H1 (cell line): ENCODE measurements at regions of chr1 and their contacts with region 1.

Region 1: DNA sequence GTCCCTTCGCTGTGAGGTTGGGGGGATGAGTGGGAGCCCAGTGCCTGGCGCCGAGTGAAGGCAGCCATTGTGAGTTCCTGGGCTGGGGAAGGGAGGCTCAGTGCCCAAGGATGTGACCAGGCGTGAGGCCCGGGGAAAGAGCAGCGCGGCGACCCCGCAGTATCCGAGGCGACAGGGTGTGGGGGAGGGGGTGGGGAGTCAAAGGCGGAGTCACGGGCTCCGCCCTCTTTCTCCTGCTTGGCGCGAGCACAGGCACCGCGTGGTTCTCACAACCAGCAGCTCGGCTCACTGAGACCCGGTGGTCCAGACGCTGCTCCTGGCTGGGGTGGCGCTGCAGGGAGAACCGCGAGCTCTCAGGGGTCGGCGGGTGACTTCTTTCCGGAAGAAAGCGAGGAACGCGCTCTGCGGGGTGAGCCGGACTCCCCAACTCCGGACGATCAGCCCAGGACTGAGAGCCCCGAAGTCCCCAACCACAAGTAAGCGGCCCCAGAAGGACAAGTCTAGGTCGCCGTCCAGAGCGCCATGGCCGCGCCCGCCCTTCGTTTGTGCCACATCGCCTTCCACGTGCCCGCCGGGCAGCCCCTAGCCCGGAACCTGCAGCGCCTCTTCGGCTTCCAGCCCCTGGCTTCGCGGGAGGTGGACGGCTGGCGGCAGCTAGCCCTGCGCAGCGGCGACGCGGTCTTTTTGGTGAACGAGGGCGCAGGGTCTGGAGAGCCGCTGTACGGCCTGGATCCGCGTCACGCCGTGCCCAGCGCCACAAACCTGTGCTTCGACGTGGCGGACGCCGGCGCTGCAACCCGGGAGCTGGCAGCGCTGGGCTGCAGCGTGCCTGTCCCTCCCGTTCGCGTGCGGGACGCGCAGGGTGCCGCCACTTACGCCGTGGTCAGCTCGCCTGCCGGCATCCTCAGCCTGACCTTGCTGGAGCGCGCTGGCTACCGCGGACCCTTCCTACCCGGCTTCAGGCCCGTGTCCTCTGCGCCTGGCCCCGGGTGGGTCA is at the start of gene HPDL:
- DNase-seq: peak; percentile 64 to 85
- H3K4me3 ChIP-seq: peak within 1 kb of the TSS; percentile 61 to 69 (median 64)
- H3K27ac ChIP-seq: peak within 1 kb of the TSS; percentile 65; the same call in 1 of the 2 replicates
- H3K4me1 ChIP-seq: peaks cover 8 to 24% (median 14%) of the 10 kb centered on the region in 4 experiments; a peak in 6 of 7 replicates
- H3K27me3 ChIP-seq: no peaks in the 10 kb centered on the region
- CTCF ChIP-seq: no peak
- EP300 ChIP-seq: peak in 1 of 2 experiments; percentile 15; a peak in 1 of 3 replicates
- POLR2A ChIP-seq: peak; percentile 77 to 100
- RAD21 ChIP-seq: peak; percentile 14 to 23; a peak in 1 of 4 replicates
- total RNA-seq, gene HPDL: 58.5 and 60.6 TPM in 2 replicates

Region 2: DNA sequence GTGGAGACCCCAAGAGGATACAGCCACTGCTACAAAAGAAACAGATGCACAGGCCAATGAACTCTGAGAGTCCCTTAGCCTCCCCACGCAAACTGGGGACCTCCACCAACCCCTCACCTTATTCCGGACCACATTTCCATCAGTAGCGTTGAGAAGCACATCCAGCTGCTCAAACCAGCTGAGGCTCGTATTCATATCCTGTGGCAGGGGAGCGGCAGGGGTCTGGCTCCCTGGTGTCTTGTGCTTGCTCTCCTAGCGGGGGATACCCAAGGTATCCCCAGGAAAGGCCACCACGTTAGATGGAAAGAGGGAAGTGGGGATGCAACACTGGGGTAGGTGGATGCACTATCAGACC is 172.5 kb after region 1 on chr1:
- CTCF ChIA-PET with region 1: no interaction called
- POLR2A ChIA-PET with region 1: interaction called, 24 read pairs
- DNase-seq: no peak
- H3K4me3 ChIP-seq: peak overlapping the region; percentile 65 to 86 (median 72)
- H3K27ac ChIP-seq: no peak overlapping the region
- H3K4me1 ChIP-seq: peaks cover 0 to 10% (median 3%) of the 10 kb centered on the region in 4 experiments; a peak in 6 of 7 replicates
- H3K27me3 ChIP-seq: no peaks in the 10 kb centered on the region
- CTCF ChIP-seq: no peak
- EP300 ChIP-seq: no peak
- POLR2A ChIP-seq: no peak
- RAD21 ChIP-seq: no peak

Region 3: DNA sequence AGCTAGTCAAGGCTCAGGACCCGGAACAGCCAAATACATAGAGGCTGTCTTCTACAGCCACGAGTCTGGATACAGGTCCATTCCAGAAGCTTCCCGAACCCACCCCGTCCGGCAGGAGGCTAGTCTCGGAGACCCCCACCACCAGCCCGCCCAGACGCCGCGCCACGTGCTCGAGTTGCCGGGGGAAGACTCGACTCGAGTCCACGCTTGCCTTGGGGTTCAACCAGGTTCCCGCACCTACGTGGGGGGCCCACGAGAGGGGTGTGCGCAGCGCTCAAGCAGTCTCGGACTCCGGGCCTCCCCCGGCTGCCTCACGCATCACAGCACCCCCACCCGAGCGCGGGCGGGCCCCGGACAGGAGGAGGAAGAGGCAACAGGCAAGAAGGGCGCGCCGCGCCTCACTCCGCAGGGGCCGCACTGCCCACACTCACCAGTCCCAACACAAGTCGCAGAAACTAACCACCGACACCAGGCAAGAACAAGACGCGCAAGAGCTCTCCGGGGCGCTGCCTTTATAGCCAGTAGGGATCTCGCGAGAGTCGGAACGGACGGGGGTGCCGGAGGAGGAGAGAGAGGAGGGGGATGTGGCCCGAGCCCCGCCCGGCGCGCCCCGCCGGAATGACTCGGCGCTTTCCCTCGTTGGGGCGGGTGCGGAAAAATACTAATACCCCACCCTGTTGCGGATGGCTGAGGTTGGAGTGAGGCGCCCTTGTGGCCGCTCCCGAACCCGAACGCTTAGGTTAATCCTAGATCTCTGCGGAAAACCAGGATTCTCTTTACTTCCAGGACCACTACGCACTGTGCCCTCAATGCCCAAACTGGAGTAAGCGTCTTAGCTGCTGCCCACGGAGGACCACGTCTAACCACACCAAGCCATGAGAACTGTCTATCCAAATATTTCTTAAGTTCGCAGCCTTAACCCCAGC is 194.7 kb after region 1 on chr1 and contains the start of gene PRDX1:
- CTCF ChIA-PET with region 1: no interaction called
- POLR2A ChIA-PET with region 1: interaction called, 28 read pairs
- DNase-seq: peak; percentile 91 to 99
- H3K4me3 ChIP-seq: peak within 1 kb of the TSS; percentile 96 to 100 (median 98)
- H3K27ac ChIP-seq: peak within 1 kb of the TSS; percentile 91
- H3K4me1 ChIP-seq: peaks cover 2 to 12% (median 5%) of the 10 kb centered on the region in 4 experiments; a peak in 5 of 7 replicates
- H3K27me3 ChIP-seq: no peaks in the 10 kb centered on the region
- CTCF ChIP-seq: peak in 1 of 3 experiments; percentile 11; a peak in 1 of 4 replicates
- EP300 ChIP-seq: peak in 1 of 2 experiments; percentile 82; a peak in 1 of 3 replicates
- POLR2A ChIP-seq: peak; percentile 100
- RAD21 ChIP-seq: no peak; a peak in 1 of 4 replicates
- total RNA-seq, gene PRDX1: 1,354 and 1,418 TPM in 2 replicates